ENCODE measurements at regions of chr7 and their contacts with region 1.

Region 1: DNA sequence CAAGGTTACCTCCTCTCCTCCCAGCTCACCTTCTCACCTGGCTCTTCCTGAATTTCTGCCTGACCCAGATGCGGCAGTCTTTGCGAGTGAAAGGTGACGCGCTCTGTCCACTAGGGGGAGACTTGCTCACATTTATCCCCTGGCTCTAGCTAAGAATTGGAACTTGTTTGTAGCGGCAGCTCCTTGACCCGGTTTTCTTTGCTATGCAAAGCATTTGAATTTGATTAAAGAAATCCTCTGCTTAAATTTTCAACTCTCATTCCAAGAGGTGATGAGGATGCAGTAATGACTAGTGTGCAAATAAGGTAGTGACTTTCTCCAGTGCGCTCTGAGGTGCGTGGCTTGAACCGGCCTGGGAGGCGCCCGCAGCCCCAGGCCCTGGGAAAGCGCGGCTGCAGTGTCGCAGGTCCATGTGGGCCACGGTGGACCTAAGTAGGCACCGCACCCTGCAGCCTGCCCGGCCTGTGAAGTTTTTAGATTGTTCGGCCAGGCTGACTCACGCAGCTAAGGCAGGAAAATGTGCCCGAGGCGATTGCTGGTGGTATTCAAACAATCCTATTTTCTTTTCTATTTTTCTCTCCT is 336.9 kb upstream of the NPSR1 start:
- DNase-seq: peak; percentile 79
- H3K4me3 ChIP-seq: peak overlapping the region in 2 of 3 experiments; percentile 2
- H3K27ac ChIP-seq: no peak overlapping the region
- H3K4me1 ChIP-seq: peaks cover 3% of the 10 kb centered on the region
- H3K27me3 ChIP-seq: no peaks in the 10 kb centered on the region
- CTCF ChIP-seq: peak; percentile 86 to 87
- POLR2A ChIP-seq: no peak

Region 2: GRCh38 chr7:34133983-34134782 is 186.9 kb before region 1 on chr7:
- CTCF ChIA-PET with region 1: interaction called, 28 read pairs
- POLR2A ChIA-PET with region 1: no interaction called
- dilution Hi-C with region 1: no loop called
- intact Hi-C with region 1: loop called (anchors 1 kb)
- DNase-seq: peak; percentile 67
- H3K4me3 ChIP-seq: no peak overlapping the region
- H3K27ac ChIP-seq: no peak overlapping the region
- H3K4me1 ChIP-seq: no peaks in the 10 kb centered on the region
- H3K27me3 ChIP-seq: peaks cover 2 to 4% of the 10 kb centered on the region in 2 experiments
- CTCF ChIP-seq: peak; percentile 64 to 76
- POLR2A ChIP-seq: no peak

Region 3: DNA sequence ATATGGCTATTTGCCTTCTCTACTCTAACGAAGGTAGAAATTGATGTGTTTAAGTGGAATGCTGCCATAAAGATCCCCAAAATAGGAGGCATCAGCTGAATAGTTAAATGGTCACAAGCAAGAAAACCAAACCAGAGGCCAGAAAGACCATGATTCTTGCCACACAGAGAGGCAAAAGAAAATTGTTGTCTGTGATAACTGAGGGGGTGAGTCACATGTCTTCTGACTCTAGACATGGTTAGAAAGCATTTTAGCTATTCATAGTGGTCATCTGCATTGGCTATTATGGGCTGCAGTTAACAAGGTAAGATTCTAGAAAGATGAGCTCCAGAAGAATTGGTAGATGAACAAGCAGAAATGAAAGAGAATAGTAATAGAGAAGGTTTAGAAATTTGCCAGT is 24.4 kb before region 1 on chr7:
- CTCF ChIA-PET with region 1: interaction called, 12 read pairs
- POLR2A ChIA-PET with region 1: no interaction called
- dilution Hi-C with region 1: no loop called
- intact Hi-C with region 1: no loop called
- DNase-seq: no peak
- H3K4me3 ChIP-seq: no peak overlapping the region
- H3K27ac ChIP-seq: no peak overlapping the region
- H3K4me1 ChIP-seq: peaks cover 20% of the 10 kb centered on the region
- H3K27me3 ChIP-seq: no peaks in the 10 kb centered on the region
- CTCF ChIP-seq: no peak
- POLR2A ChIP-seq: no peak

Region 4: GRCh38 chr7:34430458-34430857 is 109.4 kb after region 1 on chr7:
- CTCF ChIA-PET with region 1: interaction called, 18 read pairs
- POLR2A ChIA-PET with region 1: no interaction called
- dilution Hi-C with region 1: no loop called
- intact Hi-C with region 1: loop called (anchors 1 kb)
- DNase-seq: peak; percentile 47
- H3K4me3 ChIP-seq: no peak overlapping the region
- H3K27ac ChIP-seq: no peak overlapping the region
- H3K4me1 ChIP-seq: no peaks in the 10 kb centered on the region
- H3K27me3 ChIP-seq: no peaks in the 10 kb centered on the region
- CTCF ChIP-seq: peak; percentile 24 to 41
- POLR2A ChIP-seq: no peak

Region 5: GRCh38 chr7:34596892-34597291 is 275.8 kb after region 1 on chr7:
- CTCF ChIA-PET with region 1: interaction called, 222 read pairs
- POLR2A ChIA-PET with region 1: no interaction called
- dilution Hi-C with region 1: no loop called
- intact Hi-C with region 1: loop called (anchors 1 kb)
- DNase-seq: peak; percentile 50
- H3K4me3 ChIP-seq: no peak overlapping the region
- H3K27ac ChIP-seq: no peak overlapping the region
- H3K4me1 ChIP-seq: no peaks in the 10 kb centered on the region
- H3K27me3 ChIP-seq: no peaks in the 10 kb centered on the region
- CTCF ChIP-seq: peak in 1 of 2 donors; percentile 42
- POLR2A ChIP-seq: no peak

Region 6: GRCh38 chr7:34662058-34662708 is 341.1 kb after region 1 on chr7:
- CTCF ChIA-PET with region 1: no interaction called
- POLR2A ChIA-PET with region 1: no interaction called
- dilution Hi-C with region 1: no loop called
- intact Hi-C with region 1: no loop called
- DNase-seq: no peak
- H3K4me3 ChIP-seq: no peak overlapping the region
- H3K27ac ChIP-seq: no peak overlapping the region
- H3K4me1 ChIP-seq: no peaks in the 10 kb centered on the region
- H3K27me3 ChIP-seq: no peaks in the 10 kb centered on the region
- CTCF ChIP-seq: no peak
- POLR2A ChIP-seq: no peak

Region 7: DNA sequence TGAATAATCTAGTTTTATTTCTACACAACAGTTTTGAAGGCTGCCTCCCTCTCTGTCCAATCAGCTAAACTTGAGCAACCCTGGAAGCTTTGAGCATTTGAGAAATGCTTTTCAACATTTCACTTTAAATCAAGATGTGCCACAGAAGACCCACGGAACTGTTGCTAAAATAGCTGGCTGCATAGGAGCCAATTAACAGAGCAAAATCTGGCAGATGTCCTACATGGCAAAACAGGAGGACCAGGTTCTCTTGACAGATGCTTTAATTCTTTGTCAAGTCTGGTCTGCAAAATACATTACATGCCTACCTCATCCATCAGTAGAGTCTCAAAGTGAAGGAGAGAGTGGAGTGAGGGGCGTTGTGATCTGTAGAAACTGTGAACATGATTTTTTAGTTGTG is 530.3 kb after region 1 on chr7:
- CTCF ChIA-PET with region 1: no interaction called
- POLR2A ChIA-PET with region 1: no interaction called
- dilution Hi-C with region 1: no loop called
- intact Hi-C with region 1: no loop called
- DNase-seq: no peak
- H3K4me3 ChIP-seq: no peak overlapping the region
- H3K27ac ChIP-seq: no peak overlapping the region
- H3K4me1 ChIP-seq: peaks cover 18% of the 10 kb centered on the region
- H3K27me3 ChIP-seq: no peaks in the 10 kb centered on the region
- CTCF ChIP-seq: no peak
- POLR2A ChIP-seq: no peak

Measured in endothelial cell of umbilical vein (primary cell).